Tibial artery (tissue), 4 donors: ENCODE measurements at regions of chr10 and their contacts with region 1.

Region 1: GRCh38 chr10:124418726-124419501 is at the start of gene OAT:
- DNase-seq: peak; percentile 97 to 98
- H3K4me3 ChIP-seq: peak within 1 kb of the TSS; percentile 79 to 92
- H3K27ac ChIP-seq: peak within 1 kb of the TSS; percentile 97
- H3K4me1 ChIP-seq: peaks cover 0 to 43% (median 33%) of the 10 kb centered on the region in 4 donors
- H3K27me3 ChIP-seq: peaks cover 0 to 18% of the 10 kb centered on the region in 2 donors
- CTCF ChIP-seq: no peak

Region 2: DNA sequence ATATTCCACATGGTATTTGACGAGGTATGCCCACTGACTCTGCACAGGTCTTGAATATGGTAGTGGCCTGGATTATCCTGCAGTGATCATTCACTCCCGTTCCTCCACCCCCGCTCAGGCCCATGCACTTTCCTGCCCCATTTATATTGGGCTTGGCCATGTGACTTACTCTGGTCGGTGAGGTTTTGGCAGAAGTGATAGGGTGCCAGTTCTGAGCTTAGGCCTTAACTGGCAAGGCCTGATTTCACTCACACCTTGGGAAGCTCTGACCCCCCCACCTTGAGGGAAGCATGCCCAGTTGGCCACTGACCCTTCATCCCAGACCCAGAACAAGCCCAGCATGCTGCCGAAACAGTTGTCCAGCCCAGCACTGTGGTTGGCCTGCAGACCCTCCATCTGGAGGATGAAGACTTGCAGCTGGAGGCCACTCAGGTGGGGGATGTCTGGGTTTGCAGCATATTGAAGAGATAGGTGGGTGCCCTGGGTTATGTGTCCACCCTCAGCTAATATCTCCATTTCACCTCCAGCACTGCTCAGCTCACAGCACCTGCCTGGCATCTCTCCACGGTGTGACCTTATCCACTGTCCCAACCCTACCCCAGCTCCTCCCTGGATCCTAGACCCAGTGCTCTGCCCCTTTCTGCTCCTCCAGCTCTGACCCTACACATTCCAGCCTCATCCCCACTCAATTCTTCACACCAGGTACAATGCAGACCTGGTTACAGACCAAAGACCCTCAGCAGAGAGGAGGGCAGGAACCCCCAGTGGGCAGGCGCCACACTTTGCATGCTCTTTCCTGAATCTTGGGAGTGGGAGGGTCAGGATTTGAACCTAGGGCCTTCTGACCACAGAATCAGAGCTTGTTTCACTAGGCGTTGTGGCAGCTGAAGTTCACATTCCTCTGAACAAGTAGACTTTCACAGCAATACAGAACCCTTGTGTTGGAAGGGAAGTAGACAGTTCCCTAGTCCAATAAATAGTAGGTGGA is 187.5 kb before region 1 on chr10:
- intact Hi-C with region 1: no loop called
- DNase-seq: peak in 1 of 2 donors; percentile 55
- H3K4me3 ChIP-seq: no peak overlapping the region
- H3K27ac ChIP-seq: no peak overlapping the region
- H3K4me1 ChIP-seq: peaks cover 0 to 5% (median under 1%) of the 10 kb centered on the region in 4 donors
- H3K27me3 ChIP-seq: no peaks in the 10 kb centered on the region
- CTCF ChIP-seq: no peak

Region 3: GRCh38 chr10:124461438-124462347 is 42.8 kb after region 1 on chr10 and contains the start of gene LHPP:
- intact Hi-C with region 1: loop called (anchors 2 kb)
- DNase-seq: peak; percentile 84 to 90
- H3K4me3 ChIP-seq: peak within 1 kb of the TSS; percentile 63 to 77
- H3K27ac ChIP-seq: peak within 1 kb of the TSS; percentile 70 to 83
- H3K4me1 ChIP-seq: peaks cover 0 to 6% (median 0%) of the 10 kb centered on the region in 4 donors
- H3K27me3 ChIP-seq: peaks cover 0 to 2% of the 10 kb centered on the region in 2 donors
- CTCF ChIP-seq: peak; percentile 50 to 57

Region 4: DNA sequence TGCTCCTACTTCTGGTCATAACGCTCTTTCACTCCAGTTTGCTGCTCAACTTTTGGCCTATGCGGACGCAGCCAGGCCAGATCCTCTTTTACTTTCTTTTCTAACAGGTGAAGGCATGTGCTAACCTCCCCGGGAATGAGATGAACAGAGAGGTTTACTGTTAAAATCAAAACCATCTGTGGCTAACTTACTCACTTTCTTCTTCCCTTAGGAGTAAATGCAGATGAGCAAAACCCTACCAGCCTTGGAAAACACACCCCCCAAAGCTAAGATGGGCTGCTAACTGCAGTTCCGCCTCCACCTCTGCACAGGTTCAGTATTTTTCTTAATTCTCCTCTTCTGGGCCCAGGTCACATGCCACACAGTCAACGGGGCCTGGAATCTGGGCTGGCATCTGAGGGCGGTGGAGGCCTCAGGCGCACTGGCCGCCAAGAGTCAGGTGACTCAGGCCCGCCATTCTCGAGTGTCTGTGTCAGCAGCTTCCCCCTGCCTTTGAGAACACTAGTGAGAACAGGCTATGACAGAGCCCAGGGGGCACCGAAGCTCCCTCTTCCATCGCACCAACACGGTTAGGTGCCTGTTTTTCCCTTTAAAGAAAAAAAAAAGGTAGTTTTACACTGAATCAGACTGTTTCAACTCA is 314.1 kb after region 1 on chr10:
- intact Hi-C with region 1: loop called (anchors 10 kb)
- DNase-seq: peak; percentile 68 to 89
- H3K4me3 ChIP-seq: no peak overlapping the region
- H3K27ac ChIP-seq: peak overlapping the region; percentile 83 to 85
- H3K4me1 ChIP-seq: peaks cover 0 to 65% (median 45%) of the 10 kb centered on the region in 4 donors
- H3K27me3 ChIP-seq: no peaks in the 10 kb centered on the region
- CTCF ChIP-seq: no peak